Ascending aorta (tissue), 2 donors: ENCODE measurements at regions of chr2 and their contacts with region 1.

Region 1: DNA sequence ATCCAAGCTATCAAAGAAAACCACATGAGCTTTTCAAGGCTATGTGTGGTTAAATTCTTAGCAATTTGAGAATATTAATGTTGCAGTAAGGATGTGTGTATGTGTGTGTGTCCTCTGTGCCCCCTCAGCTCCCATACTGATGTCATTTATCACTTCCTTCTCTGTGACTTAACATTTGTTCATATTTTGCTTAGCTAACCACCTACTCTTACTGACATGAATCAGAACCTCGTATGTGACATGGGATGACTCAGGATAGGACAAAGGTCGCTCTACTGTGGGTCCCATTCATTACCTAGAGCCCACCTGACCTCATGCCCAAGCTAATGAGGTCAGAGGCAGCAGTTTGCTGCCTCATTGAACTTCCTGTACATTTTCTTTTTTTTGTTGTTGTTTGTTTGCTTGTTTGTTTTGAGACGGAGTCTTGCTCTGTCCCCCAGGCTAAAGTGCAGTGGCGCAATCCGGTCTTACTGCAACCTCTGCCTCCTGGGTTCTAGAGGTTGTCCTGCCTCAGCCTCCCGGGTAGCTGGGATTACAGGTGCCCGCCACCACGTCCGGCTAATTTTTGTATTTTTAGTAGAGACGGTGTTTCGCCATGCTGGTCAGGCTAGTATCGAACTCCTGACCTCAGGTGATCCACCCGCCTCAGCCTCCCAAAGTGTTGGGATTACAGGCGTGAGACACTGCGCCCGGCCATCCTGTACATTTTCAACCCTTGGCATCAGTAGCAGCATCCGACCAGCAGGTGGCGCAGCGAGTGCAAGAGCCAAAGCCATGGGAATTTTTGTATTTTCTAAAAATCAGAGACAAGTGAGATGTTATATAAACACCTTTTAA is 36.4 kb downstream of the MOGAT1 start:
- DNase-seq: peak; percentile 24 to 92
- H3K4me3 ChIP-seq: peak overlapping the region in 1 of 2 donors; percentile 30
- H3K27ac ChIP-seq: peak overlapping the region; percentile 45 to 78
- H3K4me1 ChIP-seq: peaks cover 0 to 30% of the 10 kb centered on the region in 2 donors
- H3K27me3 ChIP-seq: no peaks in the 10 kb centered on the region
- CTCF ChIP-seq: peak; percentile 93 to 98 (median 98)

Region 2: DNA sequence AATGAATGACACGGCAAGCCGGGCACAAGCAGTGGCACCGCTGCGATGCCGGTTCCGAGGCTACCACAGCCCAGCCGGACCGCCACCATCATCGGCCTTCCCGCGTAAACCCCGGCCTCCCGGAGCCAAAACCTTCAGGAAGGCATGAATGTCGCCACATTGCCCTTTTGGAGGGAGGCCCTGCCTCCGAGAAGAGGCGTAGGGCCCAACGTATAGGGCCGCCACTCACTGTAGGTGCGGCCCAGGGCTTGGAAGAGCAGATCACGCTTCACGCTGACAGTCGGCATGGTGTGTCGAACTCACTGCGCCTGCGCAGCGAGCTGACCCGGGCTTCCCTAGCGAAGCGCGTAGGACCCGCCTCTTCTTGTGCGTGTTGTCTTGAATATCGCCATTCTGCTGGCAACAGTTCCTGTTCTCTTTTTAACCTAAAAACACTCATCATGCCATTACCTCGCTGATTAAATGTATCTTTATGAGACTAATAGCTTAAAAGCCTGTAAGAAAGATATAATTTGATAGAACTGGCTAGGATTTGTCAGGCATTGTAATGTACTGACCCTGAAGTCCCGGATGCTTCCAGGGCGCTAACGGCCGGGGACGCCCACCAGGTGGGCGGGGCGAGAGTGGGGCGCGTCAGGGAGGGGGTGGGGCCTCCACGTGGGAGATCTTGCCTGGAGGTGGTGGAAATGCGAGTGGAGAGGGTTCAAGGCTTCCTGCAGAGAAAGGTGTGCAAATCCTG is 52.0 kb before region 1 on chr2 and contains the start of gene FARSB:
- intact Hi-C with region 1: no loop called
- DNase-seq: peak; percentile 65 to 96
- H3K4me3 ChIP-seq: peak within 1 kb of the TSS; percentile 68 to 88
- H3K27ac ChIP-seq: peak within 1 kb of the TSS; percentile 82 to 85
- H3K4me1 ChIP-seq: peaks cover 3 to 12% of the 10 kb centered on the region in 2 donors
- H3K27me3 ChIP-seq: no peaks in the 10 kb centered on the region
- CTCF ChIP-seq: no peak
- total RNA-seq, gene FARSB: 4.4 TPM

Region 3: DNA sequence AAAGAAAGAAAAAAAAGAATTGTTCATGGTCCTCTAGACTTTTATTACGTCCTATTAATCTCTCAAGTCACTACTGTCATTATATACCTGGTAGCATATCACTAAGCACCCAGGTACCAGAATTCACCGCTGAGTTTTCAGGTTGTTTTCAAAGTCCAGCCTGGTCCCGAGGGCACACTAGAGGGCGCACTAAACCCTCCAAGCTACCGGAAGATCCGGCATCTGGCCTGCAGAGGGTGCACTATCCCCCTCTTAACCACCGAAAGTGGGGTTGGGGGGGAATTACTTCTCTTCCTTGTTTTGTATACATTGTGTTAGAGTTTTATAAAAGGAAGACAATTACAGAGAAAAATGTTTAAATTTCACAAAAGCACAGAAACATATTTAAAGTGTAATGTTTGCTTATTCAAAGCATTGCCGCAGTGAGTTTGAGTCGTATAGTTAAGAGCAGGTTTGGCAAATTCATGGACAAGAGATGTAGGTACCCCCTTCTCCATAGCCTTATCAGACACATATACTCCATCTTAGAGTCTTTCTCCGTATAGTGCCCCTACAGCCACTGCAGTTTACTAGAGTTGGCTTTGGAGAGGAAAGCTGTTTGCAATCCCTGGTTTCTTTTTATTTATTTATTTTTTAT is 17.2 kb before region 1 on chr2:
- intact Hi-C with region 1: loop called (anchors 2 kb)
- DNase-seq: peak; percentile 16 to 85
- H3K4me3 ChIP-seq: no peak overlapping the region
- H3K27ac ChIP-seq: no peak overlapping the region
- H3K4me1 ChIP-seq: peaks cover 0 to 6% of the 10 kb centered on the region in 2 donors
- H3K27me3 ChIP-seq: no peaks in the 10 kb centered on the region
- CTCF ChIP-seq: peak; percentile 92 to 97 (median 97)

Region 4: GRCh38 chr2:222792001-222792611 is 84.2 kb after region 1 on chr2:
- intact Hi-C with region 1: loop called (anchors 5 kb)
- DNase-seq: peak; percentile 42 to 84
- H3K4me3 ChIP-seq: no peak overlapping the region
- H3K27ac ChIP-seq: peak overlapping the region; percentile 72 to 85
- H3K4me1 ChIP-seq: peaks cover 0 to 23% of the 10 kb centered on the region in 2 donors
- H3K27me3 ChIP-seq: no peaks in the 10 kb centered on the region
- CTCF ChIP-seq: no peak

Region 5: GRCh38 chr2:222903234-222904220 is 195.6 kb after region 1 on chr2:
- intact Hi-C with region 1: loop called (anchors 2 kb)
- DNase-seq: no peak
- H3K4me3 ChIP-seq: no peak overlapping the region
- H3K27ac ChIP-seq: peak overlapping the region in 1 of 2 donors; percentile 61
- H3K4me1 ChIP-seq: peaks cover 3 to 29% of the 10 kb centered on the region in 2 donors
- H3K27me3 ChIP-seq: no peaks in the 10 kb centered on the region
- CTCF ChIP-seq: peak; percentile 42 to 57 (median 44)